ENCODE measurements at regions of chr1 and their contacts with region 1.

Region 1: GRCh38 chr1:109677459-109677858 is 9.6 kb downstream of the GSTM2 start:
- DNase-seq: no peak
- ATAC-seq: no peak
- H3K4me3 ChIP-seq: no peak overlapping the region
- H3K4me3 Mint-ChIP-seq: no peak overlapping the region
- H3K27ac ChIP-seq: no peak overlapping the region
- H3K27ac Mint-ChIP-seq: no peak overlapping the region
- H3K4me1 ChIP-seq: no peaks in the 10 kb centered on the region
- H3K4me1 Mint-ChIP-seq: no peaks in the 10 kb centered on the region
- H3K27me3 ChIP-seq: no peaks in the 10 kb centered on the region
- H3K27me3 Mint-ChIP-seq: no peaks in the 10 kb centered on the region

Region 2: GRCh38 chr1:109570417-109570827 is 107.0 kb before region 1 on chr1:
- CTCF ChIA-PET with region 1: interaction called in 1 of 2 experiments, 11 read pairs
- POLR2A ChIA-PET with region 1: no interaction called
- DNase-seq: no peak
- ATAC-seq: no peak
- H3K4me3 ChIP-seq: no peak overlapping the region
- H3K4me3 Mint-ChIP-seq: no peak overlapping the region
- H3K27ac ChIP-seq: no peak overlapping the region
- H3K27ac Mint-ChIP-seq: no peak overlapping the region
- H3K4me1 ChIP-seq: no peaks in the 10 kb centered on the region
- H3K4me1 Mint-ChIP-seq: peaks cover 18 to 22% (median 21%) of the 10 kb centered on the region in 3 donors
- H3K27me3 ChIP-seq: no peaks in the 10 kb centered on the region
- H3K27me3 Mint-ChIP-seq: no peaks in the 10 kb centered on the region